ENCODE measurements at regions of chr12 and their contacts with region 1.

Region 1: GRCh38 chr12:9732921-9733461 is at the start of gene CLECL1:
- DNase-seq: no peak
- H3K4me3 Mint-ChIP-seq: peak within 1 kb of the TSS; percentile 85
- H3K27ac Mint-ChIP-seq: peak within 1 kb of the TSS; percentile 86
- H3K4me1 Mint-ChIP-seq: peaks cover 52% of the 10 kb centered on the region
- H3K27me3 Mint-ChIP-seq: no peaks in the 10 kb centered on the region
- total RNA-seq, gene CLECL1: 5.3 and 9.1 TPM in 2 replicates

Region 2: DNA sequence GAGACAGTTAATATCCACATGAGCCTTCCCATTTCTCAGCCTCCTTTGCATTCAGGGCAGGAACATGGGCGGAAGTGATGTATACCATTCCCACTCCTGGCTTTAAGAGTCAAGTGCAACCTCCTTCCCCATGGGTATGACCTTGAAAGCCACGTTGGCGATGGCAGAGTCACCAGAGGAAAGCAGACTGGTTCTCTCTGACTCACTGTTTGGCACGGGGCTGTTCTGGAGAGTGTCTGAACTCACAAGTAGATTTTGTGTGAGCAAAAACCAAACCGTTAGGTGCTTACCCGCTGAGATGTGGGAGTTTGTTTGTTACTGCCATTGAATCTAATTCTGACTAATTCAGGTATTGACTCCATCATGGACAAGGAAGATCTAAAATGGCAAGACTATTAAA is 488.1 kb before region 1 on chr12:
- intact Hi-C with region 1: loop called (anchors 10 kb)
- DNase-seq: peak; percentile 66
- H3K4me3 Mint-ChIP-seq: peak overlapping the region; percentile 15
- H3K27ac Mint-ChIP-seq: peak overlapping the region; percentile 96
- H3K4me1 Mint-ChIP-seq: peaks cover 29% of the 10 kb centered on the region
- H3K27me3 Mint-ChIP-seq: peaks cover 16% of the 10 kb centered on the region

Region 3: GRCh38 chr12:9634177-9634803 is 98.7 kb before region 1 on chr12:
- intact Hi-C with region 1: loop called (anchors 2 kb)
- DNase-seq: peak; percentile 94
- H3K4me3 Mint-ChIP-seq: peak overlapping the region; percentile 64
- H3K27ac Mint-ChIP-seq: peak overlapping the region; percentile 57
- H3K4me1 Mint-ChIP-seq: peaks cover 50% of the 10 kb centered on the region
- H3K27me3 Mint-ChIP-seq: peaks cover 4% of the 10 kb centered on the region

Region 4: GRCh38 chr12:9702255-9702654 is 30.7 kb before region 1 on chr12:
- intact Hi-C with region 1: loop called (anchors 2 kb)
- DNase-seq: peak; percentile 87
- H3K4me3 Mint-ChIP-seq: peak overlapping the region; percentile 68
- H3K27ac Mint-ChIP-seq: peak overlapping the region; percentile 83
- H3K4me1 Mint-ChIP-seq: peaks cover 69% of the 10 kb centered on the region
- H3K27me3 Mint-ChIP-seq: no peaks in the 10 kb centered on the region

Region 5: GRCh38 chr12:9760699-9761418 is 27.9 kb after region 1 on chr12 and contains the start of gene CD69:
- intact Hi-C with region 1: loop called (anchors 1 kb)
- DNase-seq: peak; percentile 96
- H3K4me3 Mint-ChIP-seq: peak within 1 kb of the TSS; percentile 94
- H3K27ac Mint-ChIP-seq: peak within 1 kb of the TSS; percentile 98
- H3K4me1 Mint-ChIP-seq: peaks cover 48% of the 10 kb centered on the region
- H3K27me3 Mint-ChIP-seq: peaks cover 5% of the 10 kb centered on the region
- total RNA-seq, gene CD69: 106 and 111 TPM in 2 replicates

Region 6: GRCh38 chr12:9786726-9787717 is 54.0 kb after region 1 on chr12:
- intact Hi-C with region 1: no loop called
- DNase-seq: no peak
- H3K4me3 Mint-ChIP-seq: no peak overlapping the region
- H3K27ac Mint-ChIP-seq: no peak overlapping the region
- H3K4me1 Mint-ChIP-seq: peaks cover 22% of the 10 kb centered on the region
- H3K27me3 Mint-ChIP-seq: no peaks in the 10 kb centered on the region